ENCODE measurements at regions of chr19 and their contacts with region 1.

Region 1: DNA sequence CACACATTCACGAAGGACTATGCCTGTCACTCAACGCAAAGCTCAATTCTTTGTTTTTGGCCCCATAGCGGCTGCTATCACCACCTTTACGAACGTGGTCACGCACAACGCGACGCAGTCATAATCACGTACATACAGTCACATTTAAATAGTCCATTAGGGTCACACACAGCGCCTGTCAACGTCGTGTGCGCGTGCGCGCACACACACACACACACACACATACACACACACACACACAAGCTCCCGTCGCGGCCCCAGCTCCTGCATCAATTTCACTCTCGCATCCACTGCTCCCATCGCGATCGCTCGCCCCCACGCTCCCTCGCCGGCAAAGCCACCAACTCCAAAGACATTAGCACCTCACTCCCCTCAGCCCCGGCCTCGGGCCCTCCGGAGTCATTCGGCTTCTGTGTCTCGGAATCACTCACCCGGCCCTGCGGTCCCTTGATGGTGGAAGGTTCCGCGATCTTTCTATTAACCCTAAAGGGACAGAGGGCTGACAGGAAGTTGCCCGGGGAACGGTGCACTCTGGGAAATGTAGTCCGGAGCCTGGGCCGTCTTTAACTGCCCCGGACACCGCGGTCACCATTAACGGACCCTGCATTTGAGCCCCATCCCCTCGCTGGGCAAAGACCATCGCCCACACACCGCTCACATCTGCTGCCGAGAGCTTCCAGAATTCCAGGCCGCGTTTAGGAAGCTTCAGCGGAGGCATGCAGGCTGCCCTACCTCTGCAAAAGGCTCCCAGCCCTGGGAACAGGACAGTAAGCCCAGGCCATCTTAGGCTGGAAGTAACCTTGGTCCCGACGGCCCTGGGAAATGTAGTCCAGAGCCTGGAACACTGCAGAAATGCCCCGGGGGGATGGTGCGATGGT is at the start of gene ZNF790:
- DNase-seq: peak; percentile 88 to 93
- ATAC-seq: peak; percentile 99 to 100 (median 100)
- H3K4me3 ChIP-seq: peak within 1 kb of the TSS; percentile 94
- H3K27ac ChIP-seq: peak within 1 kb of the TSS; percentile 86
- H3K4me1 ChIP-seq: no peaks in the 10 kb centered on the region
- H3K27me3 ChIP-seq: no peaks in the 10 kb centered on the region
- CTCF ChIP-seq: no peak
- total RNA-seq, gene ZNF790: 2.5 to 5.1 (median 4.5) TPM

Region 2: DNA sequence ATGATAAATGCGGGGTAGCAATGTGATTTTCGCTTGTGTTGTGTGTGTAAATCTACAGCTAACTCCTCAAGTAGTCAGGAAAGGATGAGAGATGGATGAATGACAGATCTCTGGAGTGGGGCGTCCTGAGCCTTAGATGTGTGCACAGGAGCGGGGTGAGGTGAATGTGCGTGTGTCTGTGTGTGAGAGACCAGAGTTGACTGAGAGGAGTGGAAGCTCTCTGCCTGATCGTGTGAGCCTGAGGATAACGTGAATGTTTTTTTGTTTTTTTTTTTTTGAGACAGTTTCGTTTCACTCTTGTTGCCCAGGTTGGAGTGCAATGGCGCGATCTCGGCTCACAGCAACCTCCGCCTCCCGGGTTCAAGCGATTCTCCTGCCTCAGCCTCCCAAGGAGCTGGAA is 172.3 kb before region 1 on chr19:
- intact Hi-C with region 1: no loop called
- DNase-seq: no peak
- ATAC-seq: no peak
- H3K4me3 ChIP-seq: peak overlapping the region; percentile 91
- H3K27ac ChIP-seq: no peak overlapping the region
- H3K4me1 ChIP-seq: peaks cover 7% of the 10 kb centered on the region
- H3K27me3 ChIP-seq: no peaks in the 10 kb centered on the region
- CTCF ChIP-seq: no peak

Region 3: GRCh38 chr19:36796076-36796992 is 41.8 kb before region 1 on chr19:
- intact Hi-C with region 1: loop called in 1 of 2 experiments (anchors 5 kb)
- DNase-seq: no peak
- ATAC-seq: no peak
- H3K4me3 ChIP-seq: peak overlapping the region; percentile 79
- H3K27ac ChIP-seq: peak overlapping the region; percentile 53
- H3K4me1 ChIP-seq: no peaks in the 10 kb centered on the region
- H3K27me3 ChIP-seq: no peaks in the 10 kb centered on the region
- CTCF ChIP-seq: no peak

Region 4: GRCh38 chr19:36850559-36851442 is 12.7 kb after region 1 on chr19 and contains the start of gene ZNF345:
- intact Hi-C with region 1: loop called in 1 of 2 experiments (anchors 1 kb)
- DNase-seq: peak; percentile 91 to 94
- ATAC-seq: peak; percentile 97 to 98 (median 98)
- H3K4me3 ChIP-seq: peak within 1 kb of the TSS; percentile 99
- H3K27ac ChIP-seq: peak within 1 kb of the TSS; percentile 93
- H3K4me1 ChIP-seq: peaks cover 13% of the 10 kb centered on the region
- H3K27me3 ChIP-seq: no peaks in the 10 kb centered on the region
- CTCF ChIP-seq: no peak
- total RNA-seq, gene ZNF345: 0.76 to 2.3 (median 1.5) TPM

Region 5: DNA sequence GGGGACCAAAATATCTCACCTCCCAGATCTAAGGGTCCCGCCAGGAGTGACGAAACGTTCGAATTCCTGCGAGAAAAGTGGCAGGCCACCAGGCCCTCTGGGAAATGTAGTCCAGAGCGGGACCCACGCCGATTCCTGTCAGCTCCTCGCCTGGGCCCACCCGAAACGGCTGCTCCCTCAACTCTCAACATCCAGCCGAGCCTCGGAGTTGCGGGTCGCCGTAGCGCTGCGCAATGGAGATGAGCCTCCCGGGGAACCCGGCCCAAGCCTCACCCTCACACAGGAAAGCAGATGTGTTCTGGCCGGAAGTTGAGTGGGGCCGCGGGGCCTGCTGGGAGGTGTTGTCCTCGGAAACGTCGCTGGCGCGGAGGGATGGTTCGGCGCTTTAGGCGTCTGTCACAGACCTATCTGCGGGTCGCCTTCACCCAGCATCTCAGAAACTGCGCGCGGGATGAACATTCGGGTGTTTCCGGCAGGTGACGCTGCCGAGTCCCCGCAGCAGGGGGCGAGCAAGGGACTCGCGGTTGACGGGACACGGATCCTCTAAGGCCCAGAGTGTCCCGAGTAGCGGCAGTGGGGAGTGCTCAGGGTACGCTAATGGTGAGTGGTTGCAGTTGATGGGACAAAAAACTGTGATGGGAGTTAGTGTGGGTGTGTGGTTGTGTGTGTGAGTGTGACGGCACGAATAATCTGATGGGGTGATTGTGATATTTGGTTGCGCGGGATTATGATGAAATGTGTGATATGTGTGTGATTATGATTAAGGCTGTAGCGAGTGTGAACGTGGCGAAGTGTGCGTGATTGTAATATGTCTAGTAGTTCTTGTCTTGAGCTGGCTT is 78.1 kb after region 1 on chr19 and contains the starts of genes ZNF568 and ZNF829:
- intact Hi-C with region 1: loop called in 1 of 2 experiments (anchors 5 kb)
- DNase-seq: peak; percentile 88 to 95
- ATAC-seq: peak; percentile 96 to 99 (median 98)
- H3K4me3 ChIP-seq: peak within 1 kb of the TSS; percentile 95
- H3K27ac ChIP-seq: peak within 1 kb of the TSS; percentile 97
- H3K4me1 ChIP-seq: no peaks in the 10 kb centered on the region
- H3K27me3 ChIP-seq: no peaks in the 10 kb centered on the region
- CTCF ChIP-seq: peak; percentile 57
- total RNA-seq, gene ZNF568: 4.8 to 13.9 (median 7.3) TPM
- total RNA-seq, gene ZNF829: 0.92 to 1.5 (median 1.1) TPM

Measured in psoas muscle (tissue), 8 donors.